CD8-positive, alpha-beta memory T cell (primary cell): ENCODE measurements at regions of chrX and their contacts with region 1.

Region 1: DNA sequence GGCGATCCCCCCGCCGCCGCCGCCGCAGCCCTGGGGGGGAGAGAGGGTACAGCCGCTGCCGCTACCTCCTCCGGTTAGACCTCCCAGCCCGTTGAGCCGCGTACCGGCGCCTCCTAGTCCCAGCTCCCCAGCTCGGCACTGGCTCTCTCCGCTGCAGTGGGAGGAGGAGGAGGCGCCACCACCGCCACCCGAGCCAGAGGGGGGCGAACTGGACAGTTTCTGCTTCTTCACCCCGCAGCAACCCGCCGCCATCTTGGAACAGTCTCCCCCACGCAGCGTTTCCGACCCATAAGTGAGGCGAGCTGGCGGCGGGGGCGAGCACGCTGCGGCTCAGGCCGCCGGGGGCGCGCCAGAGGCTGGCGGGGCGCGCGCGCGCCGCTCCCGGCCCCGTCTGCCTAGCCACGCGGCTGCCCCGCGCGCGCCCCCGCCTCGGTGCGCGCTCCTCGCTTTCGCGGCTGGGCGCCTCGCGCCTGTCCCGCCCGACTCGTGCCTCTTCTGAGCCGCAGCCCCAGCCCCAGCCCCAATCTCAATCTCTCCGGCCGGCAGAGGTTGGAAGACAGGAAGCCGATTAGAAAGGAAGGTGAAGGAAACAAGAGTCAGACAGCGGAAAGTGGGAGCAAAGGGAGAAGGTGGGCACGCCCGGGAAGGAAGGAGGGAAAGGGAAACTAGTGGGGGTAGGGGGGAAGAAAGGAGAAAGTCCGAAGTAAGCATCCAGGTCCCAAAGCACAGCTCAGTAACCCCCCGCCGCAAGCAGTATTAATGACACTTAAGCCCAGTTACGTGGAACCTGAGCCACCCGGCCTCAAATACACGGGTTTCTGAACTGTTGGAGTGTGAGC is at the start of gene AMMECR1:
- DNase-seq: peak; percentile 70 to 87 (median 81)
- H3K4me3 ChIP-seq: peak within 1 kb of the TSS; percentile 78
- H3K4me3 Mint-ChIP-seq: peak within 1 kb of the TSS; percentile 87 to 100 (median 93)
- H3K27ac ChIP-seq: peak within 1 kb of the TSS; percentile 79
- H3K27ac Mint-ChIP-seq: peak within 1 kb of the TSS; percentile 93 to 97 (median 96)
- H3K4me1 ChIP-seq: peaks cover 14% of the 10 kb centered on the region
- H3K4me1 Mint-ChIP-seq: peaks cover 30 to 54% (median 44%) of the 10 kb centered on the region in 3 donors
- H3K27me3 ChIP-seq: no peaks in the 10 kb centered on the region
- H3K27me3 Mint-ChIP-seq: peaks cover 0 to 7% of the 10 kb centered on the region in 2 donors
- total RNA-seq, gene AMMECR1: 16.3 to 16.6 TPM

Region 2: GRCh38 chrX:110167952-110168451 is 150.0 kb before region 1 on chrX:
- CTCF ChIA-PET with region 1: interaction called, 10 read pairs
- POLR2A ChIA-PET with region 1: no interaction called
- DNase-seq: peak; percentile 26 to 65 (median 35)
- H3K4me3 ChIP-seq: no peak overlapping the region
- H3K4me3 Mint-ChIP-seq: no peak overlapping the region
- H3K27ac ChIP-seq: no peak overlapping the region
- H3K27ac Mint-ChIP-seq: no peak overlapping the region
- H3K4me1 ChIP-seq: no peaks in the 10 kb centered on the region
- H3K4me1 Mint-ChIP-seq: peaks cover 0 to 6% (median 3%) of the 10 kb centered on the region in 3 donors
- H3K27me3 ChIP-seq: no peaks in the 10 kb centered on the region
- H3K27me3 Mint-ChIP-seq: no peaks in the 10 kb centered on the region

Region 3: GRCh38 chrX:110241816-110242215 is 76.2 kb before region 1 on chrX:
- CTCF ChIA-PET with region 1: interaction called, 3 read pairs
- POLR2A ChIA-PET with region 1: interaction called, 11 read pairs
- DNase-seq: no peak
- H3K4me3 ChIP-seq: no peak overlapping the region
- H3K4me3 Mint-ChIP-seq: no peak overlapping the region
- H3K27ac ChIP-seq: no peak overlapping the region
- H3K27ac Mint-ChIP-seq: peak overlapping the region in 1 of 8 donors; percentile 52
- H3K4me1 ChIP-seq: peaks cover 18% of the 10 kb centered on the region
- H3K4me1 Mint-ChIP-seq: peaks cover 61 to 88% (median 87%) of the 10 kb centered on the region in 3 donors
- H3K27me3 ChIP-seq: no peaks in the 10 kb centered on the region
- H3K27me3 Mint-ChIP-seq: peaks cover 0 to 11% of the 10 kb centered on the region in 2 donors